ENCODE measurements at regions of chr13 and their contacts with region 1.

Region 1: GRCh38 chr13:97574926-97575325 is 141.0 kb downstream of the RAP2A start:
- DNase-seq: no peak
- H3K4me3 ChIP-seq: no peak overlapping the region
- H3K27ac ChIP-seq: no peak overlapping the region
- H3K4me1 ChIP-seq: peaks cover 0 to 7% (median 3%) of the 10 kb centered on the region in 4 donors
- H3K27me3 ChIP-seq: no peaks in the 10 kb centered on the region
- CTCF ChIP-seq: peak in 1 of 2 experiments; percentile 22

Region 2: GRCh38 chr13:98860491-98860890 is 1285.6 kb after region 1 on chr13:
- intact Hi-C with region 1: loop called (anchors 5 kb)
- DNase-seq: no peak
- H3K4me3 ChIP-seq: no peak overlapping the region
- H3K27ac ChIP-seq: no peak overlapping the region
- H3K4me1 ChIP-seq: peaks cover 0 to 19% (median 0%) of the 10 kb centered on the region in 4 donors
- H3K27me3 ChIP-seq: no peaks in the 10 kb centered on the region
- CTCF ChIP-seq: no peak

Measured in tibial artery (tissue), 4 donors.